ENCODE measurements at regions of chr1 and their contacts with region 1.

Region 1: DNA sequence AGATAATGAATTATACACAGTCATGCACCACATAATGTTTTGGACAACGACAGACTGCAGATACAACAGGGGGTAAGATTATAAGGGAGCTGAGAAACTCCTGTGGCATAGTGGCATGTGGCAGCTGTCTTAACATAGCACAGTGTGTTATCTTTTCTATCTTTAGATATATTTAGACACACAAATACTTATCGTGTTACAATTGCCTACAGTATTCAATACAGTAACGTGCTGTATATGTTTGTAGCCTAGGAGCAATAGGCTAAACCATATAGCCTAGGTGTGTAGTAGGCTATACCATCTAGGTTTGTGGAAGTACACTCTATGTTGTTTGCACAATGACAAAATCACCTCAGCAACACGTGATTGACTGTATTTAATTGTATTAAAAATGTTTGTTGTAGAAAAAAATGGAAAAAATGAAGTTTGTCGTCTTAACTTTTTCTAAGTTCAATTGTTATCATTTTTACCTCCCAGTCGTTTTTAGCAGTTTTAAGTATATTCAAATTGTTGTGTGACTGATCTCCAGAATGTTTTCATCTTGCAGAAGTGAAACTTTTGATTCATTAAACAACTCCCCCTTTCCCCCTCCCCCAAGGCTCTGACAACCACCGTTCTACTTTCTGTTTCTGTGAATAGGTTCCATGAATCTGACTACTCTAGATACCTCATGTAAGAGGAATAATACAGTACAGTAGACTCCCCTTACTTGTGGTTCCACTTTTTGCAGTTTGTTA is 351.0 kb upstream of the B3GALT2 start:
- DNase-seq: peak; percentile 91
- H3K4me3 Mint-ChIP-seq: no peak overlapping the region
- H3K27ac Mint-ChIP-seq: peak overlapping the region; percentile 26
- H3K4me1 Mint-ChIP-seq: peaks cover 43% of the 10 kb centered on the region
- H3K27me3 Mint-ChIP-seq: no peaks in the 10 kb centered on the region

Region 2: DNA sequence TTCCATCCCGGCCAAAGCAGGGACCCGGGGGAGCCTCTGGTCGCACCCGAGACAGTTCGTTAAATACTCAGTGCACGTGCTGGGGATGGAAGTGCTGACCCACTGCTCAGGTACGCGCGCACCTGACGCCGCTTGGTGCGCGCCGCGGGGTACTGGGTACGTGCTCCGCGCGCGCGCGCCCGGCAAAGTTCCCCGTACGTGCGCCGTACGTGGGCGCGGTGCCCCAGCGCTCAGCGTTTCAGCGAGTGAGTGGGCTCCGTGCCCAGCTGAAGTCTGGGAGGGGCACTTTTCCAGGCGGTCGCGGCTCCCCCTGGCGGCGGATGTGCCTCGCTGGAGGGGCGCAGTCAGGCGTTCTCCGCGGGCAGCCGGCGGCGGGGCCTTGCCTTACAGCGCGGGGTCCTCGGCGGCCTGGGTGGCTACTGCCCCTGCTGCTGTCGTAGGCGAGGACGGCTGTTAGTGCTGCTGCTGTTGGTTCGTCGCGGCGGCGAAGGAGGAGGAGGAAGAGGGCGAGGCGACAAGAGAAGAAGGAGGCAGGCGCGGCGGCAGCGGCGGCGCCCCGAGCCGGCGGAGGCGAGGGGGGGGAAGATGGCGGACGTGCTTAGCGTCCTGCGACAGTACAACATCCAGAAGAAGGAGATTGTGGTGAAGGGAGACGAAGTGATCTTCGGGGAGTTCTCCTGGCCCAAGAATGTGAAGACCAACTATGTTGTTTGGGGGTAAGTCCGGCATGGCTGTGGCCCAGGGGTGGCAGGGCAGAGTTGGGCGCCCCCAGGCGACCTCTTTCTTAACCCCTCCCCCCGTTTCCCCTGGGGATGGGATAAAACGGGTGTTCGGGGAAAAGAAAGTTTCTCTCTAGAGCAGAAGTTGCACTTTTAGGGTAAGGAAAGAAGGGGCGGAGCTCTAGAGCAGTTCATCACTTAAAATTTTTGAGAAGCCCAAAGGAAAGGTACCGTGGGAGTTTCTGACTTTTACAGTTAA is 415.5 kb before region 1 on chr1 and contains the start of gene CDC73:
- CTCF ChIA-PET with region 1: no interaction called
- intact Hi-C with region 1: loop called (anchors 5 kb)
- DNase-seq: peak; percentile 97
- H3K4me3 Mint-ChIP-seq: peak within 1 kb of the TSS; percentile 92
- H3K27ac Mint-ChIP-seq: peak within 1 kb of the TSS; percentile 92
- H3K4me1 Mint-ChIP-seq: peaks cover 43% of the 10 kb centered on the region
- H3K27me3 Mint-ChIP-seq: peaks cover 1% of the 10 kb centered on the region
- total RNA-seq, gene CDC73: 39.0 to 45.2 TPM

Region 3: GRCh38 chr1:193143285-193143684 is 394.1 kb before region 1 on chr1:
- CTCF ChIA-PET with region 1: no interaction called
- intact Hi-C with region 1: no loop called
- DNase-seq: no peak
- H3K4me3 Mint-ChIP-seq: no peak overlapping the region
- H3K27ac Mint-ChIP-seq: no peak overlapping the region
- H3K4me1 Mint-ChIP-seq: peaks cover 15% of the 10 kb centered on the region
- H3K27me3 Mint-ChIP-seq: no peaks in the 10 kb centered on the region

Region 4: GRCh38 chr1:193456811-193457280 is 80.6 kb before region 1 on chr1:
- CTCF ChIA-PET with region 1: no interaction called
- intact Hi-C with region 1: loop called (anchors 1 kb)
- DNase-seq: no peak
- H3K4me3 Mint-ChIP-seq: no peak overlapping the region
- H3K27ac Mint-ChIP-seq: no peak overlapping the region
- H3K4me1 Mint-ChIP-seq: peaks cover 23% of the 10 kb centered on the region
- H3K27me3 Mint-ChIP-seq: no peaks in the 10 kb centered on the region

Region 5: GRCh38 chr1:193558491-193559028 is 21.1 kb after region 1 on chr1:
- CTCF ChIA-PET with region 1: interaction called, 3 read pairs
- intact Hi-C with region 1: loop called (anchors 1 kb)
- DNase-seq: peak; percentile 6
- H3K4me3 Mint-ChIP-seq: no peak overlapping the region
- H3K27ac Mint-ChIP-seq: no peak overlapping the region
- H3K4me1 Mint-ChIP-seq: peaks cover 13% of the 10 kb centered on the region
- H3K27me3 Mint-ChIP-seq: no peaks in the 10 kb centered on the region

Region 6: GRCh38 chr1:194043984-194044755 is 506.7 kb after region 1 on chr1:
- CTCF ChIA-PET with region 1: no interaction called
- intact Hi-C with region 1: loop called (anchors 5 kb)
- DNase-seq: no peak
- H3K4me3 Mint-ChIP-seq: no peak overlapping the region
- H3K27ac Mint-ChIP-seq: no peak overlapping the region
- H3K4me1 Mint-ChIP-seq: peaks cover 27% of the 10 kb centered on the region
- H3K27me3 Mint-ChIP-seq: no peaks in the 10 kb centered on the region